ENCODE measurements at regions of chr11 and their contacts with region 1.

Region 1: DNA sequence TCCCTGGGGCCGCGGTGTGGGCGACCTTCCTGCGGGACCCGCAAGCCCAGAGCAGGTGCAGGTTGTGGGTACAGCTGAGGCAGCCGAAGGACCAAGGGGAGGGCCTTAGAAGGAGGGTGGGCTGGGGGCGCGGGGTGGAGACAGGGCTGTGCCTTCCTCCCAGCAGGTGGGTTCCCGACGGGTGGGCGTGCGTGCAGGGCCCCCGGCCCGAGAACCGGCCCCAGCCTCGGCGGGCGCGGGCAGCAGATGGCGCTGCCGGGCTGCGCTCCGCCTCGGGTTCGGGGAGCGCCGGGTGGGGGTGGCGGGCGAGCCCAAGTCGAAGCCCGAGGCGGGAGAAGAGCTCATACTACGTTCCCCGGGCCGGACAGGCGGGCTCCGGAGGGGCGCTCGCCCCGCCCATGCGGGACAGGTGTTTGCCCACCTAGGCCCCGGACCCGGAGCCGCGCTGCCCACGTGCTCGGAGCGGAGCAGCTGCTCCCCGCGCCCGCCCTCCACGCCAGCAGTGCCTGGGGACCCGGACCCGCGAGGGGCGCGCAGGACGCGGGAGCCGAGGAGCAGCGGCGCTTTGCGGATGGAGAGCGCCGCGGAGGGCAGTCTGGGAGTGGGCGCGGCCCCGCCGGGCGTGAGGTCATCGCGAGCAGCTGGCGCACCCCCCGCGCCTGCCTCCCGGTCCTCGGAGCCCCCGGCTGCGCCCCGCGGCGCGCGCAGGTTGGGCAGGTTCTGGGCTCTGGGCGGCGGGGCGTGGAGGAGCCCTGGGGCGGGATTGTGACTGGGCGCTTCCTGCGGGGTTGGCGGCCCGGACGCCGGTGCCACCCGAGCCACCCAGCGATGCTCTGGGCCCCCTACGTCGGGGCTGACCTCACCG is 25.3 kb downstream of the DUSP8 start:
- DNase-seq: peak in 6 of 10 donors; percentile 55 to 80 (median 68)
- H3K4me3 ChIP-seq: peak overlapping the region; percentile 35 to 74 (median 59)
- H3K27ac ChIP-seq: peak overlapping the region in 38 of 59 donors; percentile 2 to 92 (median 82)
- H3K27me3 ChIP-seq: peaks cover 0 to 10% (median 0%) of the 10 kb centered on the region in 45 donors
- CTCF ChIP-seq: peak; percentile 56 to 97 (median 86)

Region 2: DNA sequence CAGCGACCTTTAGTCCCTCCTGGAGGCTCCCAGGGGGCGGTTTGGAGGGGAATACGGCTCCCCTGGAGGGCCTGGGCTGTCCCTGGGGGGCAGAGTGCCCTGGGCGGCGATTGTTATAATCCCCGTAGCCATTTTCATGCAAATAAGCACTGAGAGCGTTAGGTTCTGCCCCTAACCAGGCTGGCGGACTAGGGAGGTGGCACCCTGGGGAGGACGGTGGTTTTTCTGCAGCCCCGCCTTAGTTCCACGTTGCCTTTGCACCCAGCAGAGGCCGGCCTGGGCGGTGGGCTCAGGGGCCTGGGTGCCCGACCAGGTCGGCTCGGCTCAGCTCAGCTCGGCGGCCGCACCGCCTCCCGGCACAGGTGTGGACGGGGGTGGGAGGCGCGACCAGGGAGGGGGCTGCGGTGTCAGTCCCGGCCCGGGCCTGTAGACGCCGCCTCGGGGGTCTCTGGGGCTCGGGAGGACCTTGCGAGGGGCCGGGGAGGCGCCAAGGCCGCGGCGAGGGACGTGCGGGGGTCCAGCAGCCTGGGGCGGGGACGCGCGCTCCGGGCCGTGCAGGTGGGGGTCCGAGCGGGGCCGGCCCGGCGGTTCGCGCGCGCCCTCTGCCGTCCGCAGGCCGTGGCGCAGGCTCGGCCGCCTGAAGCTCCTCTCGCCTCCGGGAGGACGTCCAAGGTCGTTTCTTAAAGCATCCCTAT is 27.6 kb after region 1 on chr11:
- intact Hi-C with region 1: loop called (anchors 1 kb)
- DNase-seq: peak in 6 of 10 donors; percentile 47 to 84 (median 59)
- H3K4me3 ChIP-seq: peak overlapping the region; percentile 48 to 82 (median 68)
- H3K27ac ChIP-seq: peak overlapping the region; percentile 23 to 97 (median 90)
- H3K27me3 ChIP-seq: no peaks in the 10 kb centered on the region
- CTCF ChIP-seq: peak; percentile 57 to 99 (median 84)

Region 3: DNA sequence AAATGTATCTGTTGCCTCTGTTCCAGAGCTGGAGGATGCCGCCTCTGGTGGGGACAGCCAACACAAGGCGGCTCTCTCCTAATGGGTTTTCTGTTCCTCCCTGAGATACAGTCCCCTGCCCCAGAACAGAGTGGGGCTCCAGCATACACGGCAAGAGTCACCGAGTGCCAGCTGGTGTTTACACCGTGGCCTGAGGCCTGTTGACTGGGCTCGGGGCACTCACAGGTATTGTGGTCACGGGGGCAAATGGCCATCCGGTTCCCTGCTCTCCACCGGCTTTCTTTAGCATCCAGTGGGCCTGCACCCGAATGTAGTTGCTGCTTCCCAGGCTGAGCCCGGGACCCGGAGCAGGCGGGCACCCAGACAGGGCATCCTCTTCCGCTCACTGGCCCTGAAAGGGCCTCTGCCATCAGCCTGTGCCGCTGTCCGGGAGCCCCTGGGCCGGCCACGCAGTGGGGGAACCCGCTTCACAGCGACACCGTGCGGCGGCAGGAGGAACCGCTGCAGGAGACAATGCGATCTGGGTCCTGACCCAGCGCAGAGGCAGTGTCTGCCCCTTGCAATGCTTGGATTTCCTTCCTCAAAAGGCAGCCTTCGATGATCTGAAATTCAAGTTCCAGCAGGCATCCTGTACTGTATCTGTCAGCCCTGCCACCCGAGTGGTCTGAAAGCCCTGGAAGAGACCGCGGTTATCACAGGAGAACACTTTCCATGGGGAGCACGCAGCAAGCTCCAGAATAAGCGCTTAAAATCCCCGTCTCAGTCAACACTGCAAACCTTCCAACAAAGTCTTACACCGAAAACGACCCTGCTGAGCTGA is 81.9 kb after region 1 on chr11:
- intact Hi-C with region 1: loop called in 1 of 2 experiments (anchors 2 kb)
- DNase-seq: peak in 9 of 10 donors; percentile 42 to 82 (median 49)
- H3K4me3 ChIP-seq: no peak overlapping the region
- H3K27ac ChIP-seq: no peak overlapping the region
- H3K27me3 ChIP-seq: peaks cover 0 to 31% (median 6%) of the 10 kb centered on the region in 45 donors
- CTCF ChIP-seq: peak; percentile 58 to 94 (median 86)